ENCODE measurements at regions of chr1 and their contacts with region 1.

Region 1: GRCh38 chr1:150813058-150813707 is 5.1 kb upstream of the CTSK start:
- DNase-seq: peak; percentile 63
- ATAC-seq: peak; percentile 84
- H3K4me3 Mint-ChIP-seq: no peak overlapping the region
- H3K27ac Mint-ChIP-seq: no peak overlapping the region
- H3K4me1 Mint-ChIP-seq: peaks cover 7% of the 10 kb centered on the region
- H3K27me3 Mint-ChIP-seq: no peaks in the 10 kb centered on the region
- CTCF ChIP-seq: peak; percentile 48

Region 2: GRCh38 chr1:150696590-150697524 is 116.3 kb before region 1 on chr1 and contains the start of gene GOLPH3L:
- CTCF ChIA-PET with region 1: interaction called, 13 read pairs
- POLR2A ChIA-PET with region 1: interaction called, 3 read pairs
- DNase-seq: peak; percentile 92
- ATAC-seq: peak; percentile 100
- H3K4me3 Mint-ChIP-seq: peak within 1 kb of the TSS; percentile 92
- H3K27ac Mint-ChIP-seq: peak within 1 kb of the TSS; percentile 98
- H3K4me1 Mint-ChIP-seq: peaks cover 8% of the 10 kb centered on the region
- H3K27me3 Mint-ChIP-seq: no peaks in the 10 kb centered on the region
- CTCF ChIP-seq: no peak
- total RNA-seq, gene GOLPH3L: 39.5 to 46.1 TPM (median 43.3 TPM) in 3 replicates

Region 3: GRCh38 chr1:150798525-150798924 is 14.7 kb before region 1 on chr1:
- CTCF ChIA-PET with region 1: interaction called, 11 read pairs
- POLR2A ChIA-PET with region 1: no interaction called
- DNase-seq: no peak
- ATAC-seq: peak; percentile 62
- H3K4me3 Mint-ChIP-seq: no peak overlapping the region
- H3K27ac Mint-ChIP-seq: peak overlapping the region; percentile 39; the same call in 1 of the 2 replicates
- H3K4me1 Mint-ChIP-seq: peaks cover 35% of the 10 kb centered on the region
- H3K27me3 Mint-ChIP-seq: no peaks in the 10 kb centered on the region
- CTCF ChIP-seq: no peak

Region 4: DNA sequence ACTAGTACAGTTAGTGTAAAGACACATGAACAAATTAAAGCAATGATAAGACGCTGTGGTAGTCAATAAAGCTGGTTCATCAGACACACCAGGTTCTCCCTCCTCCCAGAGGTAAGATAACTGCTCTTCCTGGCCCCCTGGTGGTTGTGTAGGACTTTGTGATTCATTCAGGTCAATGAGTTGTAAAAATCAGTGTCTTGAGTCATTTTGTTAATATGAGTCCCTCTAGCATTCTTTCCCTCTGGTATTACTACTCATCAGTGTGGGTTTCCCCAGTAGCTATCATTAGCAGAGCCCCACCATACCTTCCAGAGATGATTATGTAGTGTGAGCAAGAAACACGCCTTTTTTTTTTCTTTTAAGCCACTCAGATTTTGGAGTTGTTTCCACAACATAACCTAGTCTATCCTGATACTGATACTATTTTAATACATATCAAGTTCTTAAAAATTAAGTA is 109.4 kb after region 1 on chr1:
- CTCF ChIA-PET with region 1: interaction called, 11 read pairs
- POLR2A ChIA-PET with region 1: no interaction called
- DNase-seq: peak; percentile 71
- ATAC-seq: peak; percentile 18
- H3K4me3 Mint-ChIP-seq: no peak overlapping the region
- H3K27ac Mint-ChIP-seq: peak overlapping the region; percentile 94
- H3K4me1 Mint-ChIP-seq: peaks cover 13% of the 10 kb centered on the region
- H3K27me3 Mint-ChIP-seq: no peaks in the 10 kb centered on the region; the same call in 1 of the 2 replicates
- CTCF ChIP-seq: peak; percentile 53

Measured in WTC11 (cell line).